K562 (cell line): ENCODE measurements at regions of chrX and their contacts with region 1.

Region 1: DNA sequence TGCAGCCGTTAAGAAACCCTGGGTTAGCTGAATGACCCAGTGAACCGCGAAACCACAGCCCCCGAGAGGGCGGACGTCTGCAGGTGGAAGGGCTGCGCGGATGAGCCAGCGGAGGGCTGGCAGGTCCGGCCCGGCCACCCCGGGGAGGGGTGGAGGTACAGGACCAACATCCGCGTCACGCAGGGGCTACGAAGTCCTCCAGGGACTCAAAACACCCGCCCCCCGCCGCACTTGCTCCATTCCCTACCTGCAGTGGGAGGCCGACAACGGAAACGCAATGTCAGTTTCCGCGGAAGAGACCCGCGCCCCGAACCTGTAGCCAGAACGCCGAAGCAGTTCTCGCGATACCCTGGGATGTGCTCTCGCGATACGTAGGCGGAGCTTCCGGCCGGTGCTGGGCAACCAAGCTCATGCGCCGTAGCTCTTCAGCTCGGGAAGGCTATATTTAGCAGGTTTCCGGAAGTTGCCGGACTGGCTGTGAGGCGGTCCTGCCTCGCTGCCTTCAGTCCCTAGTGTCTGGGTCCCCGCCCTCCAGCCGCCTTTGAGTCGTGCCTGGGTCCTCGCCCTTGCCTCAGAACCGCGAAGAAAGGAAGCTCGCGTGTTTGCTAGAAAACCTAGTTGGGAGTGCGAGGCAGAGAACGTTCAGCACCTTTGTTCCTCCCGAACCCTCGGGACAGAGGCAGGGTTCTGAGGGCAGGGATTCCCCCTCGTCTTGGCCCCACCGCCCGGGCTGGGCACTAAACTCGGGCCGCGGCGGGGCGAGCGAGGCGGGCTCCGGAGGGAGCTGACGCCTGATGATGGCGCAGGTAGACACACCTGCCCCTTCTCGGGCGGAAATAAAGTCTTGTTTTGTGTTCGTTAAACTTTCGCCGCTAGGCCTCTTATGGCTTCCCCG is at the starts of genes OFD1 and TRAPPC2:
- DNase-seq: peak; percentile 89 to 97 (median 92)
- ATAC-seq: peak; percentile 95
- H3K4me3 ChIP-seq: peak within 1 kb of the TSS; percentile 94
- H3K27ac ChIP-seq: peak within 1 kb of the TSS; percentile 96
- H3K4me1 ChIP-seq: peaks cover 5 to 15% of the 10 kb centered on the region in 2 experiments; a peak in 4 of 5 replicates
- H3K27me3 ChIP-seq: no peaks in the 10 kb centered on the region
- CTCF ChIP-seq: peak in 1 of 3 experiments; percentile 30; a peak in 2 of 6 replicates
- EP300 ChIP-seq: no peak
- POLR2A ChIP-seq: peak; percentile 94
- RAD21 ChIP-seq: no peak
- polyA plus RNA-seq, gene OFD1: 22.0 to 49.1 TPM
- polyA plus RNA-seq, gene TRAPPC2: 18.0 to 30.6 TPM

Region 2: DNA sequence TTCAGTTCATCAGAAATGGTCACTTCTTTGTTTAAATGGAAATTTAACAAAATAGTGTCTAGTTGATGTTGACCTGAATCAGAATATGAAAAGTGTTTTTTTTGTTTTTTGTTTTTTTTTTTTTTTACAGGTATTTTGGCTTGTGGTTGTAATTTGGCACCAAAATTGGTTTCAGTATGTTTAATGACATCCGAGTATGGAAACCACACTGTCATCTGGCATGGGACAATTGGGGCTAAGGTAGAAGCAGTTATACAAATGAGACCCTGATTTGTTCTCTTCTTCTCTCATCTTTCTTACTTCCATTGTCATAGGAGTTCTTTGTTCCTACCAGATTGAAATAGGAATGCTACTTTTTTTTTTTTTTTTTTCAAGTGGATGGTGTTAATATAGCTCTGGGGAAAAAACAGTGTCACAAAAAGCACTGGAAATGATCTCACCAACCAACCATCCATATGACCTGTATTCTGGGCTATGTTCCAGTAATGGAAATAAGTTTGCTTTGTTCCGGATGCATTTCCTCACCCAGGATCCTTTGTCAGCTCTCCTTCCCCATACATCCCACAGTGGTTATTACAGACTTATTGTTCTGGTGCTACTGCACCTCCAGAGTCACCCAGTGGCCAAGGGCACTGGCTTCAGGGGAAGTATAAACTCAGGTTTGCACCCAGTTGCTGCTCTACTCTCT is 510.5 kb before region 1 on chrX:
- CTCF ChIA-PET with region 1: no interaction called
- POLR2A ChIA-PET with region 1: no interaction called
- in situ Hi-C with region 1: no loop called
- intact Hi-C with region 1: no loop called
- DNase-seq: no peak
- ATAC-seq: no peak
- H3K4me3 ChIP-seq: no peak overlapping the region
- H3K27ac ChIP-seq: no peak overlapping the region
- H3K4me1 ChIP-seq: no peaks in the 10 kb centered on the region; a peak in 1 of 5 replicates
- H3K27me3 ChIP-seq: no peaks in the 10 kb centered on the region
- CTCF ChIP-seq: no peak
- EP300 ChIP-seq: no peak
- POLR2A ChIP-seq: no peak
- RAD21 ChIP-seq: no peak

Region 3: DNA sequence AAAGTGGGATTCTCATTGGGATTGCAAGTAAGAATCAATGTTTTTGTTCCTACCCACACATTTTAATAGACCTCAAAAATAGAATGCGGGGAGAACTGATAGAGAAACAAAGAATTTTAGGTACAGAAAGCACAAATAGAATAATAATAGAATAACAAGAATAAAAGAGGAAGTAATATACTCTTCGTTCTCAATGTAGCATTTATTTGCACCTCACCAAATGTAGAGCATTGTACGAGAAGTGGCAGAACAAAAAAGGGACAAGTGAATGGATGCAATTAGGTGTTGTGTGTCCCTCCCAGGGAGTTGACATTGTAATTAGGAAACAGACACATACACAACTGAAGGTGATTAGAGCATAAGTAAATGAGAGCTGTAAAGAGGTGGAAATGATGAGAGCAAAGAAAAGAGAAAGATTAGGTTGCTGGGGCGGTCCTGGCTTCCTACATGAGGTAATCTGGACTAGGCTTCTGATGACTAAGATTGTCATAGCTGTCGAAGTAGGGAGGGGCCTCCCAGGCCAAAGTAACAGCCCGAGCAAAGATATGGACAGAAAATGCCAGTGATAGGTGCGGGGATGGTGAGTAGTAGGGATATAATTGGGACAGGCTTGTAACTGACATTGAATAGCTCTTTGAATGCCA is 35.2 kb before region 1 on chrX:
- CTCF ChIA-PET with region 1: no interaction called
- POLR2A ChIA-PET with region 1: interaction called, 3 read pairs
- in situ Hi-C with region 1: no loop called
- intact Hi-C with region 1: loop called (anchors 5 kb)
- DNase-seq: peak; percentile 28 to 81 (median 60)
- ATAC-seq: peak; percentile 91
- H3K4me3 ChIP-seq: no peak overlapping the region
- H3K27ac ChIP-seq: peak overlapping the region; percentile 24; the same call in 2 of the 3 replicates
- H3K4me1 ChIP-seq: peaks cover 4 to 47% of the 10 kb centered on the region in 2 experiments
- H3K27me3 ChIP-seq: no peaks in the 10 kb centered on the region
- CTCF ChIP-seq: no peak
- EP300 ChIP-seq: no peak
- POLR2A ChIP-seq: no peak
- RAD21 ChIP-seq: no peak